ENCODE measurements at regions of chr10 and their contacts with region 1.

Region 1: DNA sequence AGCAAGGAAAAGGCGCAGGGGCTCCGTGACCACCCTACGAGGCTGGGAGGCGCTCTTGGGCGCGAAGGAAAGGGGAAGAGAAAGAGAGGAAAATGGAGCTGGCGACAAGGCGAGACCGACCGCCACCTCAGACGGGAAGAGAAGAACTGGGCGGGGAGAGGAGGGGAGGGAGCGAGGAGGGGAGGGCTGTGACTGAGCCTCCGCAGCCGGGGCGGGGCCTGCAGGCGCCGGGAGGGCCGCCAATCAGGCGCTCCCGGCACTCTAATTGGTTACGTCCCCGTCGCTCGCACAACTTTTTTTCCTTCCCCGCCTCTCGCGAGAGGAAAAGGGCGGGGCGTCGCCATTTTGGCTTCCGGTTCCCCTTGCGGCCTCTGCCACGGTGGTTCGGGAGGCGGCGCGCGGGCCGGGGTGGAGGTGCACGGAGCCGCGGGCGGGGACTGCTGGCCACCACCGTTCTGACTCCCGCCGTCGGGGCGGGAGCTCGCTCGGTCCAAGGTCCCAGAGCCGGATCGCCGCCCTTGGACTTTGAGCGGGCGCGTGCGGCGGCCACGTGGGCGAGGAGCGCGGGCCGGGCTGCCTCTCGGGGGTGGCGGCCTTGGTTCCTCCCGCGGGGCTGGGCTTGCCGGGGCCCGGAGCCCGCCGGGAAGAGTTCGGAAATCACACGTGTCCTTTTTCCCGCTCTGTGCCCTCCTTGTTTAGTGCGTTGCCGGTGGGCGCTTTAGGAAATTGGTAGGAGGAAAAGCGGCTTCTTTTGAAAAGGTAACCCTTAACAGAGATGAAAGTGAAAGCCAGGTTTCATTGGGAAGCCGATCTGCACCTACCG is at the start of gene GDI2:
- DNase-seq: peak; percentile 99
- H3K4me3 ChIP-seq: peak within 1 kb of the TSS; percentile 94
- H3K27ac ChIP-seq: peak within 1 kb of the TSS; percentile 85
- H3K4me1 ChIP-seq: peaks cover 65% of the 10 kb centered on the region
- CTCF ChIP-seq: no peak
- total RNA-seq, gene GDI2: 265 and 270 TPM in 2 replicates

Region 2: GRCh38 chr10:5659702-5660528 is 153.6 kb before region 1 on chr10:
- CTCF ChIA-PET with region 1: no interaction called
- POLR2A ChIA-PET with region 1: interaction called, 7 read pairs
- intact Hi-C with region 1: loop called (anchors 2 kb)
- DNase-seq: peak; percentile 83
- H3K4me3 ChIP-seq: peak overlapping the region; percentile 30
- H3K27ac ChIP-seq: peak overlapping the region; percentile 100
- H3K4me1 ChIP-seq: peaks cover 98% of the 10 kb centered on the region
- CTCF ChIP-seq: no peak

Region 3: DNA sequence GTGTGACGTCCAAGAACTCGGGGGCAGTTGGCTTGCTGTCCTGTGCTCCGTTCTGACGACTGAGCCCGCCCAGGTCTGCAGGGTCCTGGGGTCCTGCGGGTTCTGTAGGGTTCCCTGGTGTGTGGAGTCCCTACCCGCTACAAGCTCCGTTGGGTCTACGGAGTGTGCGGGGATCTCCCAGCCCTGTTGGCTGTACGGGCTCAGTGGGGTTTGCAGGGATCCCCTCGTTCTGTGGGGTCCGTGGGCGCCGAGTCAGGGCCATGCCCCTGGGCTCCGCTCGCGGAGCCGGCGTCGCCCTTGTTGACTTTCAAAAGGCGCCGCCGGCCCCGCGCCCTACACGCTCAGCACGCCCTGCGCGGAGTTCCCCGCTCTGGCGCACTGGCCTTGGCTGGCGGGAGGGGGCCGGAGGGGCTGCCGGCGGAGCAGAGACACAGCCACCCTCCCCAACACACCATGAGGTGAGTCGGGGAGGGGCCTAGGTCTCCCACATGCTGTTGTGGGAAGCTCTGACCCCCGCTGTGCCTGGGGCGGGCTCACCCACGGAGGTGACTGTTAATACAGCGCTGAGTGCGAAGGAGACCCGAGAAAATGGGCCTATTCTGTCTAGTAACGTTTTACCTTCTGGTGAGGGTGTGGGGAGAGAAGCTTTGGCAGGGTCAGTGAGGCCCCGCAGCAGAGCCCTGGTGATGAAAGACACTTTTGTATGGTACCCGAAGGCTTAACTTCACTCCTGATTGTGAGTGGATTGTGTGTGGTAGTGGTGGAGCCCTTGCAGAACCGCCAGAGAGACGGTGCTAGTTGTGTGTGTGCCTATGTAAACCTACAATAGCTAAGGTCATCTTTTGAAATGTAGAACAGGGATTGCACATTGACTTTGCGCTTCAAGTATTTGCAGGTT is 120.8 kb before region 1 on chr10:
- CTCF ChIA-PET with region 1: no interaction called
- POLR2A ChIA-PET with region 1: interaction called, 6 read pairs
- intact Hi-C with region 1: loop called (anchors 2 kb)
- DNase-seq: peak; percentile 87
- H3K4me3 ChIP-seq: peak overlapping the region; percentile 70
- H3K27ac ChIP-seq: peak overlapping the region; percentile 92
- H3K4me1 ChIP-seq: peaks cover 91% of the 10 kb centered on the region
- CTCF ChIP-seq: no peak

Region 4: DNA sequence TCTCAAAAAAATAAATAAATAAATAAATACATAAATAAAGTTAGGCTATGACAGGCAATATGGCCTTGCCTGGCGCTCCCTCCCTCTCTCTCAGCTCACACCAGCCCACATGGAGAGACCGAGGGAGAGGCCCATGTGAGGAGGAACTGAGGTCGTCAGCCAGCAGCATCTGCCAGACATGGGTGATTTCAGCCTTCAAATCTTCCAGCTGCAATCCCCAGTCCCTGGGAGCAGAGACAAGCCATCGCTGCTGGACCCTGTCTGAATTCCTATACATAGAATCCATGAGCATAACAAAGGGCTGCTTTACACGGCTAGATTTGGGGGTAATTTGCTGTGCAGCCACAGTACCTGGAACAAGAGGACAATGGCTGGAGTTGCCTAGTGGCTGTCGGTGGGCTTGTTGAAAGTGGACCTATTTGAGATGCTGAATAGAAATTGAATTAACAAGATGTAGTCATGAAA is 40.6 kb after region 1 on chr10:
- CTCF ChIA-PET with region 1: no interaction called
- POLR2A ChIA-PET with region 1: interaction called, 6 read pairs
- intact Hi-C with region 1: loop called (anchors 2 kb)
- DNase-seq: no peak
- H3K4me3 ChIP-seq: no peak overlapping the region
- H3K27ac ChIP-seq: no peak overlapping the region
- H3K4me1 ChIP-seq: peaks cover 22% of the 10 kb centered on the region
- CTCF ChIP-seq: no peak

Region 5: GRCh38 chr10:5889624-5890451 is 76.3 kb after region 1 on chr10 and contains the starts of genes ANKRD16 and FBH1:
- CTCF ChIA-PET with region 1: no interaction called
- POLR2A ChIA-PET with region 1: interaction called, 5 read pairs
- intact Hi-C with region 1: loop called (anchors 2 kb)
- DNase-seq: peak; percentile 99
- H3K4me3 ChIP-seq: peak within 1 kb of the TSS; percentile 88
- H3K27ac ChIP-seq: peak within 1 kb of the TSS; percentile 35
- H3K4me1 ChIP-seq: peaks cover 26% of the 10 kb centered on the region
- CTCF ChIP-seq: no peak
- total RNA-seq, gene ANKRD16: 7.9 and 15.2 TPM in 2 replicates
- total RNA-seq, gene FBH1: 61.9 and 65.6 TPM in 2 replicates